SK-N-SH (cell line): ENCODE measurements at regions of chr10 and their contacts with region 1.

Region 1: DNA sequence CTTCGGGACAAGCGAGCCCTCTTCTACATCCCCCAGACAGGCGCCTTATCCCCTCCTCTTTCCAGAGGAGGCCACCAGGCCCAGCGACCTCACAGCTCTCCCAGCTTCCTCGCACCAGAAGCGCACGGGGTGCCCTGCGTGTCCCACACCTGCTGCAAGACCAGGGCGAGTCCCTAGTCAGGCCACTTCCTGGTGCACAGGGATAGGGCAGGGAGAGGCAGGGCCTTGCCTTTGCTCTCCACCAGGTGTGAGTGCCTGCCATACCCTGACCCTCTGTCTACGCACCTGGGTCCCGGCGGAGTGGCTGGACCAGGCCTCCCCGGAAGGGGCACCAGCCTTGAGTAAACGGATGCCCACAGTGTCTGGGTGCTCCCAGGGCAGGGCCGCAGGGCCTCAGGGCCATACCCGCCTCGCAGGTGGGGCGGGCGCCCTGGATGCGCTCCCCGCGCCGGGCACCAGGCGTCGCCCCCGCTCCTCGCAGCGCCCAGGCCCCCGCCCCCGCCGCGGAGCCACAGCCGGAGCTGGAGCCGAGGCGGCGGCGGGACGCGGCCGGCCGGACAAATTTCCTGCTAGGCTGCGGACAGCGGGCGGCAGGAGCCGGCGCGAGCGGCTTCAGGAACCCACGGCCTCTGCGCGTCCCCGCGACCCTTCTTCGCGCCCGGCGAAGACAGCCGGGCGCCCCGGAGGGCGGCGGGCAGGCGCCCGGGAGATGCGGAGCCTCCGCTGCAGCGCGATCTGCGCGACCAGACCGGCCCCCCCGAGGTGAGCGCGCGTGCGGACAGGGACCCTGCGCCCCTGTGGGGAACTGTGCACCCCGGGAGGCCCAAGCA is at the start of gene PTPRE:
- DNase-seq: peak; percentile 96
- H3K4me3 ChIP-seq: peak within 1 kb of the TSS; percentile 70 to 77
- H3K27ac ChIP-seq: peak within 1 kb of the TSS; percentile 32 to 34
- H3K4me1 ChIP-seq: peaks cover 0 to 12% of the 10 kb centered on the region in 2 experiments; a peak in 1 of 4 replicates
- H3K27me3 ChIP-seq: no peaks in the 10 kb centered on the region
- CTCF ChIP-seq: peak; percentile 65
- EP300 ChIP-seq: no peak
- RAD21 ChIP-seq: peak; percentile 84
- polyA plus RNA-seq, gene PTPRE: 6.2 and 11.8 TPM in 2 replicates

Region 2: DNA sequence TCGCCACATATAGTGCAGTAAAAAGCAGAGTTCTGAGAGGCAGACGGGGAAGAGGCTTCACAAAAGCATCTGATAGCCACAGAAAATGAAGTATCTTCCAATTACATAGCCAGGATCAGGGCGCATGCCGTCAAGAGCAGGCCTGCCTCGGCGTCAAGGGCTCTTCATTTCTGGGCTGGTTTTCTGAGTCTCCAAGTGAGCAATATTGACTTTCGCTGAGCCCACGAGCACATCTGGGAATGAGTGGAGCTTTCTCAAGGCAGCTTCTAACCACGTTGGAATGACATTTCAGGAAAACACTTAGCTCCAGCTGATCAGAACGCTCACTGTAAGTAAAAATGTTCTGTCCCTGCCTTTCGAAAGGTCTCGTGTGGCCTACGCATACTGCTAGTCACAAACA is 65.9 kb before region 1 on chr10:
- CTCF ChIA-PET with region 1: no interaction called
- POLR2A ChIA-PET with region 1: no interaction called
- DNase-seq: no peak
- H3K4me3 ChIP-seq: no peak overlapping the region
- H3K27ac ChIP-seq: no peak overlapping the region
- H3K4me1 ChIP-seq: no peaks in the 10 kb centered on the region; a peak in 1 of 4 replicates
- H3K27me3 ChIP-seq: peaks cover 6% of the 10 kb centered on the region; the same call in 1 of the 2 replicates
- CTCF ChIP-seq: no peak
- EP300 ChIP-seq: no peak
- RAD21 ChIP-seq: no peak

Region 3: GRCh38 chr10:127928023-127928806 is 21.5 kb after region 1 on chr10:
- CTCF ChIA-PET with region 1: interaction called, 73 read pairs
- POLR2A ChIA-PET with region 1: no interaction called
- DNase-seq: peak; percentile 57
- H3K4me3 ChIP-seq: peak overlapping the region; percentile 6 to 14; a peak in 2 of 4 replicates
- H3K27ac ChIP-seq: peak overlapping the region; percentile 84 to 91
- H3K4me1 ChIP-seq: peaks cover 12 to 27% of the 10 kb centered on the region in 2 experiments; a peak in 3 of 4 replicates
- H3K27me3 ChIP-seq: no peaks in the 10 kb centered on the region
- CTCF ChIP-seq: no peak
- EP300 ChIP-seq: peak; percentile 89 to 96
- RAD21 ChIP-seq: peak; percentile 15; the same call in 1 of the 2 replicates

Region 4: DNA sequence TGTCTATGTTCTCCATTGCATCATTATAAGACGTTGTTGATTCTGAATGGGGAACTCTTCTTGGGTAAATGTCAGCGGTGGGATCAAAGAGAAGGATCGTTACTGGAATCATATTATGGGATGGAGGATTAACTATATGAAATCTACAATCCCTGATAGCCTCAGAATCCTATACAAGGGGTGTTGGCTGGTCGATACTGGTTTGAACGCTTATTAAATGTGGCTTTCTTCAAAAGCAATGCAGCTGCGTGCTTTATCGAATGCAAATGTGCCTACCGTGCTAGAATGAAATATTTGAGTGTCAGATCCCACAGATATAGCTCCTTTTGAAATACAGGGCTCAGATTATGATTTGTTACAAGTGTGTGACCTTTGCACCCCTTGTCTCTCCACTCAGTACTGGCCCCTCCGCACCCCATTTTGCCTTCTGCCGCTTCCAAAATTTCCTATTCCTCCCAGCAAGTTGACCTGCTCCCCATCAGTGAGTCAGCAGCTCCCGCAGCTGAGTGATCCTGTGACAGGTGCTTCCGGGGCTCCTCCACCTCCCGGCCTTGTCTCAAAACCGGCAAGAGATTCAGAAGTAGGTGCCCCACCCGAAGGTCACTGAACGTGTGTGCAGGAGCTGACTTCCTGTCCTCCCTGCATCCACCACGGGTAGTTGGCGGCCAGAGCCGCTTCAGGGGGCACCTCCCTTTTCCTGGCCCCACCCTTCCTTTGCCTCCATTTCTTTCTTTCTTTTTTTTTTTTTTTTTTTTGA is 76.8 kb after region 1 on chr10:
- CTCF ChIA-PET with region 1: interaction called, 15 read pairs
- POLR2A ChIA-PET with region 1: no interaction called
- DNase-seq: no peak
- H3K4me3 ChIP-seq: no peak overlapping the region
- H3K27ac ChIP-seq: no peak overlapping the region
- H3K4me1 ChIP-seq: no peaks in the 10 kb centered on the region
- H3K27me3 ChIP-seq: no peaks in the 10 kb centered on the region
- CTCF ChIP-seq: no peak
- EP300 ChIP-seq: no peak
- RAD21 ChIP-seq: no peak

Region 5: DNA sequence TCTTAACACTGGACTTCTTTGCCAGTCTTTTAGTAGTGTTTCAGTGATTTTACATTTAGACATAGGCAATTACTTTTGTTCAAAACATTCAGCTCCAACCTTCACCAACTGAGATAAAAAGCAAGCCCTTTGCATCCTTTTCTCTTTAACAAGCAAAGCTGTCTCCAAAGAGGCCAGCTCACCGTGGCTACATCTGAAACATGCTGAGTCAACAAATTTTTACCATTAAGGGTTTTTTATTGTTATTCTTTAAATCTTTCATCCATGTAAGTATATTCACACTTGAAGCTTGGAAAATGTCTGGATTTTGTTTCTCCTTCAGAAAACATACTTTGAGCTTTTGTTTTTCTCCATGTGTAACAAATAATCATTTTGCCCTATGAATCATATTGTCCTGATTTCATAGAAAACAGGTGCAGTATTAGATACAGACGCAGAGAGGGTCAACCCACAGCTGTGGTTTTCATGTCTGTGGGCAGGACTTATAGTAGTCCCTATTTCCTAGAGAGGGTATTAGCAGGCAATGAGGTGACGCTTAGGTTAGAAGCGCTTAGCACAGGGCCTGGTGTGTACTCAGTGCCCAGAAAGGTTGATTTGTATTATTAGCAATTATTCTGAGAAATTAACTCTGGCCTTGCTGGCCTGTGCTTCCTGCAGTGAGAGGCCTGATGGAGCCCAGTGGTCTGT is 120.0 kb after region 1 on chr10:
- CTCF ChIA-PET with region 1: interaction called, 12 read pairs
- POLR2A ChIA-PET with region 1: no interaction called
- DNase-seq: no peak
- H3K4me3 ChIP-seq: no peak overlapping the region
- H3K27ac ChIP-seq: no peak overlapping the region
- H3K4me1 ChIP-seq: peaks cover 0 to 6% of the 10 kb centered on the region in 2 experiments; a peak in 2 of 4 replicates
- H3K27me3 ChIP-seq: no peaks in the 10 kb centered on the region
- CTCF ChIP-seq: no peak
- EP300 ChIP-seq: no peak
- RAD21 ChIP-seq: no peak

Region 6: GRCh38 chr10:128069351-128070051 is 162.7 kb after region 1 on chr10:
- CTCF ChIA-PET with region 1: interaction called, 64 read pairs
- POLR2A ChIA-PET with region 1: no interaction called
- DNase-seq: peak; percentile 85
- H3K4me3 ChIP-seq: peak overlapping the region in 1 of 2 experiments; percentile 11; a peak in 1 of 4 replicates
- H3K27ac ChIP-seq: no peak overlapping the region
- H3K4me1 ChIP-seq: no peaks in the 10 kb centered on the region
- H3K27me3 ChIP-seq: no peaks in the 10 kb centered on the region
- CTCF ChIP-seq: peak; percentile 83
- EP300 ChIP-seq: no peak
- RAD21 ChIP-seq: peak; percentile 95